Heart right ventricle (tissue), 16 donors: ENCODE measurements at regions of chrX and their contacts with region 1.

Region 1: DNA sequence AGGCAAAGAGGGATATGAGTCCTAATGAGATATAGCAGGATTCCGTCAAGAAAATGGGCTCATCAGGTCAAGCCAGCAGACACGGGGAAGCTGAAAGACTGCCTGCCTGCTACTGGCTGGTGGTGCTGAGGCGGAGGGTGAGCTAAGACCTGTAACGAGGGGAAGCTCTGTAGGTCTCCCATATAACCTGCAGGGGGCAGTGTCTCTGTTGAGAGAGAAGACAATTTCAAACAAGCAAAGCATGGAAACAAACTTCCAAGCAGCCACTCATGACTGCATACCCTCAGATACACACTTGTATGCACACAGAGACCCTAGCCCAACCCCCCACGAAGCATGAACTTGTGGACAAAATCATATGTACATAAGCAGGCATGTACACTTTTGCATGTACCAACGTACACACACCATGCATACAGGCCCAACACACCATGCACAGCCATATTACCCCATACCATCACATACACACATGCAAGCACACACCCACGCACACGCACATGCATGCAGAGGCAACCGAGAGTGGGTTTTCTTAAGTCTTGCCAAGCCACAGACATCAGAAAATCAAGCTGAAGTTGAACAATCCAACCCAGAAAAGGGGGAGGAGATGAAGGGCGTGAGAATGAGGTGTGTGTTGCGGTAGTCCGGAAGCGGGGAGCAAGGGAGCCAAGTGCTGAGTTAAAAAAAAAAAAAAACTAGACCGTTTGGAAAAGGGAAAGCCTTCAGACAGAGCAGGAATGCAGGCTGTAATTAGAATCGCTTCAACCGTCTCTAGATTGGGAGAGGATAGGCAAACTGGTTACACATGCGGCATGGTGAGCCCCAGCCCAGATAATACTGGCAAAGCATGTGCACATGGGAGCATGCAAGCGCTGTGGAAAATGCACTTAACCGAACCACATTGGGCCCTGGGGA is 71.0 kb downstream of the PJA1 start:
- DNase-seq: peak in 1 of 2 donors; percentile 45
- ATAC-seq: peak; percentile 32 to 72 (median 56)
- H3K4me3 ChIP-seq: no peak overlapping the region
- H3K27ac ChIP-seq: no peak overlapping the region
- H3K4me1 ChIP-seq: peaks cover 0 to 4% (median 0%) of the 10 kb centered on the region in 9 donors
- H3K27me3 ChIP-seq: peaks cover 0 to 21% (median 0%) of the 10 kb centered on the region in 7 donors
- CTCF ChIP-seq: peak; percentile 31 to 66 (median 55)

Region 2: DNA sequence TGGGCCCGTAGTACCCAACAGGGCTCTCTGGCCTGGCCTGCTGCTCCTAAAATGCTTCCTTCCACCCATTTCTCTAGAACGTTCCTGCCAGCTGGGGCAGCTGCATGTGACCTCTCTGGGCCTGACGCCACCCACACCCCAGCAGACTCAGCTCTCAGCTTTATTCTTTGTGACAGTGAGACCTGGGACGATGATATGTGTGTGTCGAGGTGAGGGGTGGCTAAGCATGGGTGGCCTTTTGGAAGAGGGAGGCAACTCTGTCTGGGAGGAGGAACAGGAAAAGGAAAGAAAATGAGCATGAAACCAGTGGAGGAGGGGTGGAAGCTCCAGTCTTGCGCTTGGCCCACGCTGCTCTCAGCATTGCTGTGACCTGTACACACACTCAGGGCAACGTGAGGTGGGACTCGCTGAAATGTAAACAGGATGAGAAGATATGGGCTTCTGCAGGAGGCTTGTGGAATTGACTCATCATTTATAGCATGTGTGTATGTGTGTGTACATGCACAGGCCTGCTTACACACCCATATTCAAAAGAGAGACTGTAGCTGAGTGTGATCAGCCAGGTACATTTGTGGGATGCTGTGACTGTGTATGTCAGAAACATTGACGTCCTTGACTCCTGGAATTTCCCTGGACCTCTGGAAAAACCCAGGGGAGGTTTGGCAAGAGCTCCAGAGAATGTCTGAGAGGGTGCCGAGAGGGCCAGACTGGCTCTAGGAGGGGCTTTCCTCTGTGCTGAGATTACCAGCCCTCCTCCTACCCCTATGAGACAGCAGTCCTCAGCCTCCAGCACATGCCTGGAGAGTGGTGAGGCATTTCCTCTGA is 66.8 kb before region 1 on chrX:
- intact Hi-C with region 1: loop called in 1 of 10 experiments (anchors 10 kb)
- DNase-seq: no peak
- ATAC-seq: peak in 3 of 8 donors; percentile 13 to 53 (median 29)
- H3K4me3 ChIP-seq: no peak overlapping the region
- H3K27ac ChIP-seq: peak overlapping the region in 1 of 10 donors; percentile 29
- H3K4me1 ChIP-seq: peaks cover 0 to 42% (median 19%) of the 10 kb centered on the region in 9 donors
- H3K27me3 ChIP-seq: peaks cover 0 to 20% (median 0%) of the 10 kb centered on the region in 7 donors
- CTCF ChIP-seq: no peak

Region 3: GRCh38 chrX:69165087-69165651 is 71.0 kb after region 1 on chrX and contains the start of gene PJA1:
- intact Hi-C with region 1: no loop called
- DNase-seq: peak; percentile 68 to 78
- ATAC-seq: peak; percentile 93 to 98 (median 98)
- H3K4me3 ChIP-seq: peak within 1 kb of the TSS; percentile 55 to 84 (median 71)
- H3K27ac ChIP-seq: peak within 1 kb of the TSS in 9 of 10 donors; percentile 52 to 88 (median 79)
- H3K4me1 ChIP-seq: peaks cover 0 to 8% (median 3%) of the 10 kb centered on the region in 9 donors
- H3K27me3 ChIP-seq: peaks cover 0 to 36% (median 0%) of the 10 kb centered on the region in 7 donors
- CTCF ChIP-seq: no peak
- total RNA-seq, gene PJA1: 9.0 to 20.2 (median 16.6) TPM